ENCODE measurements at regions of chr16 and their contacts with region 1.

Region 1: DNA sequence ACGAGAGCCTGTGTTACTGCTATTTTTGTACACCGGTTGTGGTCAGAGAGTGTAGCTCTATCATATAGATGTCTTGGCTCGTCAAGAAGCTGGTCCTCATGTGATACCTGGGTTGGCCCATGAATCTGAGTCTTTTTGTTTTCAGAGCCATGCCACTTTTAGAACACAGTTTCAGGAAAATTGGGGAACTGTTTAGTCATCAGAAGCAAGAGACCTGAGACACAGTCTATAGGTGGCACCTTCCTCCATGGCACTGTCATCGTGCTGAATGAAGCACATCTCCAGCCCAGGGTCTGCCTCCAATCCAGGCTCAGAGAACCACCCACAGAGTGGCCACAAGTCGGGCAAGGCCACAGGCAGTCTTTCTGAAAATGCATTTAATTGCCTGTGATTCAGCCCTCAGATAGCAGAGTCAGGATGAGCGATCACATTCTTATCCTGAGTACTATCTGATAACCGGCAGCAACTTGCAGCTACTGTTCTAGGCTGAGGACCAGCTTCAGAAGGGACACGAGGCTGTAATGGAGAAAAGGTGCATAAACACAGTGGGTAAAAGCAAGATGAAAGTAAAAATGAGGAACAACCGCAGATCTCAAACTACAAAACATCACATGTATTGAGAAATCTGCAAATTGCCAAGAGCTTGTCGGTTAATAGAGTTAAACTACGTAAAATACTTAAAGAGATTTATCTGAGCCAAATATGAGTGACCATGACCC is 14.2 kb upstream of the HAPSTR1 start:
- DNase-seq: no peak
- H3K4me3 Mint-ChIP-seq: no peak overlapping the region
- H3K27ac Mint-ChIP-seq: peak overlapping the region; percentile 86
- H3K4me1 Mint-ChIP-seq: peaks cover 39% of the 10 kb centered on the region
- H3K27me3 Mint-ChIP-seq: no peaks in the 10 kb centered on the region

Region 2: DNA sequence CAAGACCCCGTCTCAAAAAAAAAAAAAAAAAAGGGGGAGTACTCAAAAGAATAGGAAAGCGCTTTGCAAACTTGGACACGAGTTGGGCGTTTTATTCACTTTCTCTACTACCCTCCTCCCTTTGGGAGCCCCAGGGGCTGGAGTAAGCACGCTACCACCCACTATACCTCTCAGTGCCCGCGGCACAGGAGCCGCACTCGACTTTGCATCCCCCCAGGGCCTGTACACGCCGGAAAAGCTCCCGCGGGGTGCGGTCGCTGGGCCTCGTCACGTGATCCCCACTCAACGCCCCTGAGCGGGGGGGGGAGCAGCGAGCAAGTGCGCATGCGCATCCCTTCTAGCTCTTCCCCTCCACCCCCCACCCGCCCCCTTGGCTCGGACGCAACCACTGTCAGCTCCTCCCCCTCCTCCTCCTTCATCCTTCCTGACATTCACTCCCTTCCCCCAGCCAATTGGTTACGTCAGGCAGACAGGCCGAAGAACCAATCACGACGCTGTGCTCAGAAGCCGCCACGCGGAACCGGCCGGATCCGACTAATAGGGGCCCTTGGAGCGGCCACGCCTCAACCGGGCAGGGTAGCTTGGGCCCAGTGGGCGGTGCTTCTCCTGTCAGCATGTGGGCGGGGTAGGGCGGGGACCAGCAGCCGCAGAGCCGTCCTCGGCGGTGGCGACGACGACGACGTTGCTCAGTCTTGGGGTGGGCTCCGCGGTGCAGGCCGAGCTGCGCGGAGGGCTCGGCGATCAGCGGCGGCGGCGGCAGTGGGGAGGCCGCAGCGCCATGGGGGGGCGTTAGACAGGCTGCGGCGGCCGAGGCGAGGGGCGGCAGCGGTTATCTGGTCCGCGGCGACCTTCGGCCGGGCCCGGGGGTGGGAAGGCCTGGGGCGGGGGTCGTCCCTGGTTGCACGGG is 14.0 kb after region 1 on chr16 and contains the start of gene HAPSTR1:
- intact Hi-C with region 1: loop called (anchors 1 kb)
- DNase-seq: peak; percentile 98
- H3K4me3 Mint-ChIP-seq: peak within 1 kb of the TSS; percentile 98
- H3K27ac Mint-ChIP-seq: peak within 1 kb of the TSS; percentile 95
- H3K4me1 Mint-ChIP-seq: peaks cover 25% of the 10 kb centered on the region
- H3K27me3 Mint-ChIP-seq: no peaks in the 10 kb centered on the region
- total RNA-seq, gene HAPSTR1: 54.5 and 54.9 TPM in 2 replicates